A673 (cell line): ENCODE measurements at regions of chr4 and their contacts with region 1.

Region 1: GRCh38 chr4:48578132-48578968 is 88.3 kb downstream of the ZAR1 start:
- DNase-seq: peak; percentile 76
- H3K4me3 ChIP-seq: no peak overlapping the region
- H3K27ac ChIP-seq: no peak overlapping the region
- H3K4me1 ChIP-seq: no peaks in the 10 kb centered on the region
- H3K27me3 ChIP-seq: no peaks in the 10 kb centered on the region
- CTCF ChIP-seq: peak; percentile 85

Region 2: GRCh38 chr4:48681856-48682255 is 103.5 kb after region 1 on chr4:
- CTCF ChIA-PET with region 1: no interaction called
- POLR2A ChIA-PET with region 1: no interaction called
- intact Hi-C with region 1: loop called (anchors 5 kb)
- DNase-seq: peak; percentile 51
- H3K4me3 ChIP-seq: no peak overlapping the region
- H3K27ac ChIP-seq: no peak overlapping the region
- H3K4me1 ChIP-seq: peaks cover 4% of the 10 kb centered on the region
- H3K27me3 ChIP-seq: no peaks in the 10 kb centered on the region
- CTCF ChIP-seq: peak; percentile 46